ENCODE measurements at regions of chr6 and their contacts with region 1.

Region 1: GRCh38 chr6:27838058-27838944 is 73.9 kb downstream of the OR2B2 start:
- DNase-seq: peak; percentile 73
- ATAC-seq: peak; percentile 76
- H3K4me3 Mint-ChIP-seq: no peak overlapping the region
- H3K27ac Mint-ChIP-seq: no peak overlapping the region
- H3K4me1 Mint-ChIP-seq: peaks cover 18% of the 10 kb centered on the region
- H3K27me3 Mint-ChIP-seq: no peaks in the 10 kb centered on the region
- CTCF ChIP-seq: no peak

Region 2: GRCh38 chr6:26183581-26184366 is 1654.5 kb before region 1 on chr6:
- CTCF ChIA-PET with region 1: no interaction called
- POLR2A ChIA-PET with region 1: interaction called, 11 read pairs
- intact Hi-C with region 1: no loop called
- DNase-seq: peak; percentile 60
- ATAC-seq: peak; percentile 86
- H3K4me3 Mint-ChIP-seq: peak overlapping the region; percentile 98
- H3K27ac Mint-ChIP-seq: peak overlapping the region; percentile 91
- H3K4me1 Mint-ChIP-seq: peaks cover 30% of the 10 kb centered on the region
- H3K27me3 Mint-ChIP-seq: no peaks in the 10 kb centered on the region
- CTCF ChIP-seq: no peak

Region 3: GRCh38 chr6:27132532-27133280 is 705.6 kb before region 1 on chr6:
- CTCF ChIA-PET with region 1: no interaction called
- POLR2A ChIA-PET with region 1: interaction called, 39 read pairs
- intact Hi-C with region 1: no loop called
- DNase-seq: peak; percentile 77
- ATAC-seq: peak; percentile 84
- H3K4me3 Mint-ChIP-seq: no peak overlapping the region
- H3K27ac Mint-ChIP-seq: no peak overlapping the region
- H3K4me1 Mint-ChIP-seq: peaks cover 14% of the 10 kb centered on the region
- H3K27me3 Mint-ChIP-seq: no peaks in the 10 kb centered on the region
- CTCF ChIP-seq: no peak

Region 4: DNA sequence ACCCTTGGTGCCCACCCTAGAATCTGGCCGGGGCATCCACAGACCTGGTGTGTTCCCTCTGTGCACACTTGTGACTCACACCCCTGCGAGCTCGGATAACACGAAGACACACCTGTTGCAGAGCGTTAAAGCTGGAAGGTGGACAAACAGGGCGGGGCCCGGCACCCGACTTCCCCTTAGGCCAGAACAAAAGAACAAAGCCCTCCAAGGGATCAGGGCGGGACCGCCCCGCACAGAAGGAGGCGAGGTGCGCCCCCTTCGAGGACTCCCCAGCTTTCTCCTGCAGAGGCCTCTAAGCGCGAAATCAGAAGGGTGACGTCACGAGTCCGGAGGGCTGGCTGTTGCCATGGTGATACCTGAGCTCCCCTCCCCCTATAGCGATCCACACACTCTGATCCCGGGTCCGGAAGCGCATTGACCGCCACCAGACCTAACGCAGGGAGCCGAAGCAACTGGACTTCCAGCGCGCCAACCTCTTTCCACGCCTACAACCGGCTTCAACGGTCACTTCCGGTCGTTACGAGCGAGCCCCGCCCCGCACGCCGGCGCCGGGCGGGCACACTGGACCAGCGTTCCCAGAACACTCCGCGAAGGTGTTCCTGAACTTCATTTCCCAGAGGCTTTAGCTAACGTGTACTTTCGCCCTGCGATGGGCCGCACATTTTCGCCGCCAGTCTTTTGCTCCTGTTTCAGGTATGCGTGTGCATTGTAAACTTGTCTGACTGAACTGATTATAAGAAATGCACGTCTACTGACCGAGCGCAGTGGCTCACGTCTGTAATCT is 365.5 kb before region 1 on chr6 and contains the start of gene ZNF184:
- CTCF ChIA-PET with region 1: no interaction called
- POLR2A ChIA-PET with region 1: interaction called, 6 read pairs
- intact Hi-C with region 1: loop called (anchors 1 kb)
- DNase-seq: peak; percentile 85
- ATAC-seq: peak; percentile 92
- H3K4me3 Mint-ChIP-seq: peak within 1 kb of the TSS; percentile 95
- H3K27ac Mint-ChIP-seq: peak within 1 kb of the TSS; percentile 95
- H3K4me1 Mint-ChIP-seq: peaks cover 34% of the 10 kb centered on the region
- H3K27me3 Mint-ChIP-seq: no peaks in the 10 kb centered on the region
- CTCF ChIP-seq: no peak
- total RNA-seq, gene ZNF184: 8.1 and 8.6 TPM in 2 replicates

Region 5: GRCh38 chr6:27851440-27851839 is 13.1 kb after region 1 on chr6:
- CTCF ChIA-PET with region 1: no interaction called
- POLR2A ChIA-PET with region 1: interaction called, 16 read pairs
- intact Hi-C with region 1: no loop called
- DNase-seq: no peak
- ATAC-seq: no peak
- H3K4me3 Mint-ChIP-seq: no peak overlapping the region
- H3K27ac Mint-ChIP-seq: no peak overlapping the region
- H3K4me1 Mint-ChIP-seq: peaks cover 7% of the 10 kb centered on the region
- H3K27me3 Mint-ChIP-seq: no peaks in the 10 kb centered on the region
- CTCF ChIP-seq: no peak

Region 6: GRCh38 chr6:28863604-28864320 is 1025.5 kb after region 1 on chr6:
- CTCF ChIA-PET with region 1: no interaction called
- POLR2A ChIA-PET with region 1: interaction called, 14 read pairs
- intact Hi-C with region 1: no loop called
- DNase-seq: peak; percentile 54
- ATAC-seq: peak; percentile 30
- H3K4me3 Mint-ChIP-seq: peak overlapping the region; percentile 85
- H3K27ac Mint-ChIP-seq: peak overlapping the region; percentile 90
- H3K4me1 Mint-ChIP-seq: peaks cover 27% of the 10 kb centered on the region
- H3K27me3 Mint-ChIP-seq: peaks cover 4% of the 10 kb centered on the region
- CTCF ChIP-seq: no peak

Measured in activated B cell treated with CpG ODN at 0.5 μM for 24 hours (primary cell).